ENCODE measurements at regions of chr11 and their contacts with region 1.

Region 1: GRCh38 chr11:2151500-2152257 is 9.3 kb downstream of the INS start:
- DNase-seq: peak; percentile 36
- H3K4me3 ChIP-seq: no peak overlapping the region
- H3K27ac ChIP-seq: no peak overlapping the region
- H3K4me1 ChIP-seq: no peaks in the 10 kb centered on the region
- H3K27me3 ChIP-seq: peaks cover 32% of the 10 kb centered on the region
- CTCF ChIP-seq: peak; percentile 81

Region 2: GRCh38 chr11:1652771-1653540 is 498.7 kb before region 1 on chr11:
- CTCF ChIA-PET with region 1: interaction called, 5 read pairs
- dilution Hi-C with region 1: no loop called
- in situ Hi-C with region 1: loop called in 1 of 2 experiments (anchors 5 kb)
- intact Hi-C with region 1: loop called (anchors 1 kb)
- DNase-seq: peak; percentile 20
- H3K4me3 ChIP-seq: no peak overlapping the region
- H3K27ac ChIP-seq: no peak overlapping the region
- H3K4me1 ChIP-seq: peaks cover 23% of the 10 kb centered on the region
- H3K27me3 ChIP-seq: no peaks in the 10 kb centered on the region
- CTCF ChIP-seq: peak; percentile 79 to 93

Region 3: DNA sequence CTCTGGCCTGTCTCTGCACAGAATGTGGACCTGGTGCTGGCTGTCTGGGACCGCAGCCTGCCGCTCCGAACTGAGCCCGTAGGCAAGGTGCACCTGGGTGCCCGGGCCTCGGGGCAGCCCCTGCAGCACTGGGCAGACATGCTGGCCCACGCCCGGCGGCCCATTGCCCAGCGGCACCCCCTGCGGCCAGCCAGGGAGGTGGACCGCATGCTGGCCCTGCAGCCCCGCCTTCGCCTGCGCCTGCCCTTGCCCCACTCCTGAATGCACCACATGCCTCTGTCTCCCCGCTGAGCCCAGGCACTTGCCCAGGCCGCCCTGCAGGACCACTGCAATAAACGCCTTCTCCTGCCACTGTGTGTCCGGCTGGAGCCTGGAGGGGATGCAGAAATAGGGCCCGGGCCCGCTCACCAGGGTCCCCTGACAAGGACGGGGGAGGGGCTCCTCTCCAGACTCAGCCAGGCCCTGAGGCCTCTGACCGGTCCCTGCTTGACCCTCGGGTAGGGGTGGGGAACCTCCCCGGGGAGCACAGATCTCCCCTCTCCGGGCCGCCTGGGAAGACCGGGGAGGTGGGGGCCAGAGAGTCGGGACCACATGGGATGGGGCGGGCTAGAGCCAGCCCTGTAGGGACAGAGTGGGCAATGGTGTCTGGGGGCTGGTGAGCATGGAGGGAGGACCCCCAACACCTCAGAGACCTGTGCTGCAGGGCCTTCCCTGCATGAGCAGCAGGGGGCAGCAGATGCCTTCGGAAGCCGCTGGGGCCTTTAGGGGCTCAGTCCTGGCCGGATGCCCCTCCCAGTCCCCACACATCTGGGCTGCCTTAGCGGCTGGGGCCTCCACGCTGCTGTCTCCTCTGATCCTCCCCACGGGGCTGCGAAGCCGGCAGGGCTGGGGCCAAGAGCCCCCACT is 314.3 kb before region 1 on chr11:
- CTCF ChIA-PET with region 1: interaction called, 6 read pairs
- dilution Hi-C with region 1: no loop called
- in situ Hi-C with region 1: no loop called
- intact Hi-C with region 1: loop called (anchors 1 kb)
- DNase-seq: no peak
- H3K4me3 ChIP-seq: peak overlapping the region; percentile 13 to 69 (median 64)
- H3K27ac ChIP-seq: no peak overlapping the region
- H3K4me1 ChIP-seq: peaks cover 62% of the 10 kb centered on the region
- H3K27me3 ChIP-seq: no peaks in the 10 kb centered on the region
- CTCF ChIP-seq: peak; percentile 69 to 88

Region 4: DNA sequence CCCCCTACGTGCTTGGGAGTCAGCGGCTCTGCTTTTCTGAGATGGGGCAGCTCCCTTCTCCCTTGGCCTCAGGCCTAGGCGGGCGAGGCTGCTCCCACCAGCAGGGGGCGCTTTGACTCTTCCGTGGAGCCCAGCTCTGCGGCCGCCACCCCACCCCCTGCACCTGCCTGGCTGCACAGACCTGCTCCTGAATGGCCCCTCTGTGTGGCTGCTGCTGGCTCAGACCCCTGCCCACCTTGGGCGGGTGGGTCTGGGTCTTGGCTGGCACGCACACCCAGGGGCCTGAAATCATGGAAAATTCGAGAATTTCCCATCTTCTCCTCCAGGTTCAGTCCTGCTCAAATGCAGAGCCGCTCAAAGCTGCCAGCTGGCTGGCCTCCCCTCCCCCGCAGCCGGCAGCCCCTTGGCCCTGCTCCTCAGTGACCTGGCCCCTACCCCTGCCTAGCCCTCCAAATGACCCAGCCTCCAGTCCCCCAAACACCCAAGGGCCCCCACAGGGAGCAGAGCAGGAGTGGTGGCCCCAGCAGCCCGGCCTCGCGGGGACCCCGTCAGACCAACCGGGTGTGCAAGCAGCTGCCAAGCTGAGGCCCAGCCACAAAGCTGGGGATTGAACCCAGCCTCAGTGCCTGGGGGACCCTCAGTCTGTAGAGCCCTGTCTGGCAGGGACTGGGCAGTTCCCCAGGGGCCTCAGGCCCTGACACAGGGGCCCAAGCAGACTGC is 269.0 kb before region 1 on chr11:
- CTCF ChIA-PET with region 1: interaction called, 5 read pairs
- dilution Hi-C with region 1: no loop called
- in situ Hi-C with region 1: no loop called
- intact Hi-C with region 1: loop called (anchors 1 kb)
- DNase-seq: peak; percentile 54
- H3K4me3 ChIP-seq: no peak overlapping the region
- H3K27ac ChIP-seq: no peak overlapping the region
- H3K4me1 ChIP-seq: no peaks in the 10 kb centered on the region
- H3K27me3 ChIP-seq: no peaks in the 10 kb centered on the region
- CTCF ChIP-seq: peak; percentile 76 to 94

Region 5: GRCh38 chr11:2214527-2215229 is 63.0 kb after region 1 on chr11:
- CTCF ChIA-PET with region 1: no interaction called
- dilution Hi-C with region 1: loop called (anchors 5 kb)
- in situ Hi-C with region 1: no loop called
- intact Hi-C with region 1: no loop called
- DNase-seq: no peak
- H3K4me3 ChIP-seq: no peak overlapping the region
- H3K27ac ChIP-seq: no peak overlapping the region
- H3K4me1 ChIP-seq: peaks cover 17% of the 10 kb centered on the region
- H3K27me3 ChIP-seq: peaks cover 2% of the 10 kb centered on the region
- CTCF ChIP-seq: no peak

Measured in mammary epithelial cell (primary cell).